ENCODE measurements at regions of chr17 and their contacts with region 1.

Region 1: DNA sequence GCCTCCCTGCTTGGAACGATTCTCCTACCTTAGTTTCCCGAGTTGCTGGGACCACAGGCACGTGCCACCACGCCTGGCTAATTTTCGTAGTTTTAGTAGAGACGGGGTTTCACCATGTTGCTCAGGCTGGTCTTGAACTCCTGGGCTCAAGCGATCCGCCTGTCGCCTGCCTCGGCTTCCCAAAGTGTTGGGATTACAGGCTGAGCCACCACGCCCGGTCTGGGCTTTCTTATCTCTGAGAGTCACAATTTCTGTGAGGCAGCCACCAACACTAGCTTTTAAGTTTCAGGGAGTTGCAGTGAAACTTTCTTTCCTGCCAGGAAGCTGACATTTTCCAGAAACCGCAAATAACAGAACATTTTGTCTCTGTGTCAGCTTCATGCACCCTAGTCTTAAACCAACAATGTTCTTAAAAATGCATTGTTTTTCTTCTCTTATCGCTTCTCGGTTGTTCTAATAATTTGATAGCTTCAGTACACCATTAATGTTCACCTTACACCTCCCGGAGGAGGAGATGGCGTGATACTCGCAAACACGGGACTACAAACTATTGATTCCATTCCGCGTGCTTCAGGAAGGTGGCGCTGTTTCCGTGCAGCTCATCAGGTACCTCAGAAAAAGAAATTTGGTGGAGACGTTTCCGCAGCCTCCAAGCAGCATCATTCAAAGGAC is 7.4 kb upstream of the DHRS7B start:
- DNase-seq: peak; percentile 38 to 55
- ATAC-seq: peak; percentile 84 to 93
- H3K4me3 ChIP-seq: no peak overlapping the region
- H3K27ac ChIP-seq: peak overlapping the region in 3 of 4 donors; percentile 9 to 37 (median 18)
- H3K4me1 ChIP-seq: peaks cover 0 to 5% of the 10 kb centered on the region in 2 donors
- H3K27me3 ChIP-seq: no peaks in the 10 kb centered on the region
- CTCF ChIP-seq: peak; percentile 54 to 90 (median 67)
- POLR2A ChIP-seq: no peak

Region 2: GRCh38 chr17:21098934-21099689 is 20.3 kb before region 1 on chr17:
- in situ Hi-C with region 1: no loop called
- intact Hi-C with region 1: no loop called
- DNase-seq: peak; percentile 22 to 39
- ATAC-seq: peak; percentile 46 to 53
- H3K4me3 ChIP-seq: peak overlapping the region; percentile 50 to 76 (median 53)
- H3K27ac ChIP-seq: peak overlapping the region in 1 of 4 donors; percentile 25
- H3K4me1 ChIP-seq: peaks cover 12 to 18% of the 10 kb centered on the region in 2 donors
- H3K27me3 ChIP-seq: no peaks in the 10 kb centered on the region
- CTCF ChIP-seq: no peak
- POLR2A ChIP-seq: no peak

Region 3: GRCh38 chr17:21549107-21549687 is 429.8 kb after region 1 on chr17:
- in situ Hi-C with region 1: loop called in 1 of 4 experiments (anchors 25 kb)
- intact Hi-C with region 1: no loop called
- DNase-seq: no peak
- ATAC-seq: no peak
- H3K4me3 ChIP-seq: peak overlapping the region in 1 of 4 donors; percentile 82
- H3K27ac ChIP-seq: no peak overlapping the region
- H3K4me1 ChIP-seq: peaks cover 23 to 29% of the 10 kb centered on the region in 2 donors
- H3K27me3 ChIP-seq: no peaks in the 10 kb centered on the region
- CTCF ChIP-seq: no peak
- POLR2A ChIP-seq: no peak